Activated CD8-positive, alpha-beta T cell treated with anti-CD3 and anti-CD28 coated beads for 36 hours (primary cell): ENCODE measurements at regions of chr1 and their contacts with region 1.

Region 1: GRCh38 chr1:23539698-23540266 is 8.7 kb upstream of the E2F2 start:
- DNase-seq: peak; percentile 98
- ATAC-seq: peak; percentile 97
- H3K4me3 Mint-ChIP-seq: peak overlapping the region; percentile 45
- H3K27ac Mint-ChIP-seq: peak overlapping the region; percentile 74
- H3K4me1 Mint-ChIP-seq: peaks cover 9% of the 10 kb centered on the region
- H3K27me3 Mint-ChIP-seq: no peaks in the 10 kb centered on the region
- CTCF ChIP-seq: peak; percentile 76

Region 2: DNA sequence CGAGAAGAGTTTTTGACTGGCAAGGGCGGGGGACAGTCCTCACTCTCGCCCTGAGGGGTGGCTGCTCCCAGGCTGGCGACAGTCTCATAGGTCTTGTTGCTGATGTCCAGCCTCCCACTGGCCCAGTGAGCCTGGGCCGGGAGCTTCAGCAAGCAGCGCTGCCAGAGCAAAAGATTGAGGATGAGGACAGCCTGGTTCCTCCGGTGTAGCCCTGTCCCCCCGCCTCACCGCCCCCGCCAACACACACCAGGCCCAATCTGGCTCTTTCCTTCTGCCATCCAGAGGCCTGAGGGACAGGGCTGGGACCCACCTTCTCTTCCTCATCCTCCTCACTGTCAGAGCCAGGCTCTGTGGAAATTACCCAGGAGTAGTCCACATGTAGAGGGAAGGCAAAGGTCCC is 106.7 kb before region 1 on chr1:
- CTCF ChIA-PET with region 1: no interaction called
- POLR2A ChIA-PET with region 1: no interaction called
- intact Hi-C with region 1: no loop called
- DNase-seq: no peak
- ATAC-seq: no peak
- H3K4me3 Mint-ChIP-seq: no peak overlapping the region
- H3K27ac Mint-ChIP-seq: no peak overlapping the region
- H3K4me1 Mint-ChIP-seq: no peaks in the 10 kb centered on the region
- H3K27me3 Mint-ChIP-seq: peaks cover 1% of the 10 kb centered on the region
- CTCF ChIP-seq: no peak

Region 3: GRCh38 chr1:23514111-23514679 is 25.6 kb before region 1 on chr1:
- CTCF ChIA-PET with region 1: interaction called, 10 read pairs
- POLR2A ChIA-PET with region 1: interaction called, 3 read pairs
- intact Hi-C with region 1: no loop called
- DNase-seq: no peak
- ATAC-seq: no peak
- H3K4me3 Mint-ChIP-seq: no peak overlapping the region
- H3K27ac Mint-ChIP-seq: no peak overlapping the region
- H3K4me1 Mint-ChIP-seq: no peaks in the 10 kb centered on the region
- H3K27me3 Mint-ChIP-seq: no peaks in the 10 kb centered on the region
- CTCF ChIP-seq: no peak

Region 4: DNA sequence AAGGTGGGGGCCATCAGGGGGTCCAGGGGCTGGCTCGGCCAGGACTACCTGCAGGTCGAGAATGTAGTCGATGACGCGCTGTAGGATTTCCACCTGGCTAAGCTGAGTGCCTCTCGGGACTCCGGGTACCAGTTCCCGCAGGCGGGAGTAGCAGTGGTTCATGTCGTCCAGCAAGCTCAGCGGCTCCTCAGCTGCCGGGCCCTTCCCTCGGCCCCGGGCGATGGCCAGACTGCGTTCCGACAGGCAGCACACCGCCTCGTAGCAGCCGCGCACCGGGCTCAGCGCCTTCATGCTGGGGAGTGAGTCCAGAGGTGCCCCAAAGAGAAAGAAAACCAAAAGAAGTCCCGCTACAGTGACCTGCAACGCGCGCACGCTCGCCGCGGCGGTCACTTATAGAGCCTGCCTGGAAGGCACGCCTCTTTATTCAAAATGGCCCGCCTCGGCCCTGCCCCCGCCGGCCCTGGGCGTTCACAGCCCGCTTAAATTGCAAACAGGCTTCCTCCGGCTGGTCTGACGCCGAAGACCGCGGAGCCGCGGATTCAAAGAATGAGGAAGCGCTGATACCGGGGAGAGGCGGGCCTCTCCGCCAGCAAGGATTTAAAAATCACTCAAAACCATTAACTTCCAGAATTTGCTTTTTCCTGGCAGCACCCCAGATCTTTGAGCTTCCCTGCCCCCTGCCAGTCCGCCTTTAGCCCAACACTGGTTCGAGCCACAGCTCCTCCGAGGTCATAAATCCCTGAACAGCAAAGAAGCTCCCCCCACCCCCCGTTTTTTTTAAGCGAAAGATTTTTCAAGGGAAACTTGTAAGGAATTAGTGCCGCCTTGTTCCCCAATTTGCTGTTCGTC is 19.6 kb after region 1 on chr1 and contains the start of gene ID3:
- CTCF ChIA-PET with region 1: interaction called, 25 read pairs
- POLR2A ChIA-PET with region 1: interaction called, 7 read pairs
- intact Hi-C with region 1: no loop called
- DNase-seq: peak; percentile 98
- ATAC-seq: peak; percentile 71
- H3K4me3 Mint-ChIP-seq: peak within 1 kb of the TSS; percentile 89
- H3K27ac Mint-ChIP-seq: peak within 1 kb of the TSS; percentile 80
- H3K4me1 Mint-ChIP-seq: peaks cover 55% of the 10 kb centered on the region
- H3K27me3 Mint-ChIP-seq: peaks cover 3% of the 10 kb centered on the region
- CTCF ChIP-seq: no peak
- total RNA-seq, gene ID3: 70.4 to 74.3 TPM

Region 5: DNA sequence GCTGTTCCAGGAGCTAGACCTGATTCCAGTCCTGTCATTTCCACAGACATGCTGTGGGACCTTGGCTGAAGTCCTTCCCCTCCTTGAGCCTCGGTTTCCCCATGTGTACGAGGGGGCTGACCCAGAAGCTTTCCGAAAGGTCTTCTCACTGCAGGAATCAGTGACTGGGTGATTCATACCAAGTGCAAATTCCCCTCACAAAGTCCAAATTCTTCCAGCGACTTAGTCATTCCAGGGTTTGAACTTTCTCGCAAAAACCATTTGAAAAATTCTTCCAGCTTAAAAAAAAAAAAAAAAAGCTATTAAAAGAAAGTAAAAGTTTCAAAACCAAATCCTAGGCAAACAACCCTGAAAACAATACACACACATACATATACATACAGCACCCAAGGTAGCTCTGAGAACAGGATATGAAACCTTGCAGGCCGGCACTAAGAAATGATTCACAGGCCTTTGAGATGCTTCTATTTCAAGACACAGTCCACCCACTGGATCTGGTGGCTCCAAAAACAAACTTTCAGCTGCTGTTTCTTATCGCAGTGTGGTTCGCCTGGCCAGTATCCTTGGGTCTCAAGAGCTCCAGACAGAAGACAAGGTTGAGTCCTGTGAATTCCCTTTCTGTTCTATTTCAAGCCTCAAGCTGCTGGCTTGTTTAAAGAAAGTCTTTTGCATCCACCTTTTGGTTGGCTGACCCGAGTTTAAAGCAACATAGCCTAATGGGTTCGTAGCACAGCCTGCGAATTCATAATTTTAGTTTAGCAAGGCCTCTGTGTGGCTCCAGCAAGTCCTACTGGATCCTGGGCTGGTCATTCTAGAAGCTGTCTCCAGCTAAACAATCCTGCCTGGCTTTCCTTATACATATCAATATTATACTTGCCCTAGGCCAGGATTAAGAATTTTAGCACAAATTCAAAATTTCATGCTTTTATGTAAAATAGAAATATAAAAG is 37.5 kb after region 1 on chr1:
- CTCF ChIA-PET with region 1: interaction called, 11 read pairs
- POLR2A ChIA-PET with region 1: no interaction called
- intact Hi-C with region 1: no loop called
- DNase-seq: peak; percentile 81
- ATAC-seq: peak; percentile 93
- H3K4me3 Mint-ChIP-seq: peak overlapping the region; percentile 40
- H3K27ac Mint-ChIP-seq: peak overlapping the region; percentile 85
- H3K4me1 Mint-ChIP-seq: peaks cover 59% of the 10 kb centered on the region
- H3K27me3 Mint-ChIP-seq: no peaks in the 10 kb centered on the region
- CTCF ChIP-seq: no peak

Region 6: GRCh38 chr1:23643736-23644554 is 104.2 kb after region 1 on chr1:
- CTCF ChIA-PET with region 1: interaction called, 927 read pairs
- POLR2A ChIA-PET with region 1: interaction called, 5 read pairs
- intact Hi-C with region 1: no loop called
- DNase-seq: no peak
- ATAC-seq: no peak
- H3K4me3 Mint-ChIP-seq: no peak overlapping the region
- H3K27ac Mint-ChIP-seq: no peak overlapping the region
- H3K4me1 Mint-ChIP-seq: no peaks in the 10 kb centered on the region
- H3K27me3 Mint-ChIP-seq: no peaks in the 10 kb centered on the region
- CTCF ChIP-seq: no peak